ENCODE measurements at regions of chr3 and their contacts with region 1.

Region 1: GRCh38 chr3:149820180-149820579 is 7.2 kb downstream of the RNF13 start:
- H3K4me3 Mint-ChIP-seq: no peak overlapping the region
- H3K27ac Mint-ChIP-seq: no peak overlapping the region
- H3K4me1 Mint-ChIP-seq: peaks cover 40% of the 10 kb centered on the region
- H3K27me3 Mint-ChIP-seq: no peaks in the 10 kb centered on the region

Region 2: DNA sequence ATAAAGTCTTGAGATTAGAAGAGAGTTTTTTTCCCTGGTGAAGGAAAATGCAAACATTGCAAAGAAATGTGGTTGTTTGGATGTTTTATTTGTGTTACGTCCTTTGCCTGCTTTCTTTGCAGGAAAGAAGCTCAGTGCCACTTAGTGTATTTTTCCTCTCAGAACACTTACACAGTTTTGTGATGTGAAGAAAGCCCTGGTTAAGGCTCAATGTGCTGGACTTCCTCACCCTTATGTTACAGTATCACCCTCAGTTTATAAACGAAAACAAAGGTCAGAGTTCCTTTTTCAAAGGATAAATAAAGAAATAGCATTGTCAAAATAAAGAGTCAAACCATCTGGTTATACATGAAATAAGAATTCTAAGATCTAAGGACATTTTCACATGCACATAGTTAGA is 38.7 kb after region 1 on chr3:
- intact Hi-C with region 1: loop called (anchors 5 kb)
- H3K4me3 Mint-ChIP-seq: no peak overlapping the region
- H3K27ac Mint-ChIP-seq: no peak overlapping the region
- H3K4me1 Mint-ChIP-seq: peaks cover 5% of the 10 kb centered on the region
- H3K27me3 Mint-ChIP-seq: no peaks in the 10 kb centered on the region

Region 3: GRCh38 chr3:149879872-149880271 is 59.7 kb after region 1 on chr3:
- intact Hi-C with region 1: loop called (anchors 10 kb)
- H3K4me3 Mint-ChIP-seq: no peak overlapping the region
- H3K27ac Mint-ChIP-seq: no peak overlapping the region
- H3K4me1 Mint-ChIP-seq: peaks cover 28% of the 10 kb centered on the region
- H3K27me3 Mint-ChIP-seq: no peaks in the 10 kb centered on the region

Region 4: DNA sequence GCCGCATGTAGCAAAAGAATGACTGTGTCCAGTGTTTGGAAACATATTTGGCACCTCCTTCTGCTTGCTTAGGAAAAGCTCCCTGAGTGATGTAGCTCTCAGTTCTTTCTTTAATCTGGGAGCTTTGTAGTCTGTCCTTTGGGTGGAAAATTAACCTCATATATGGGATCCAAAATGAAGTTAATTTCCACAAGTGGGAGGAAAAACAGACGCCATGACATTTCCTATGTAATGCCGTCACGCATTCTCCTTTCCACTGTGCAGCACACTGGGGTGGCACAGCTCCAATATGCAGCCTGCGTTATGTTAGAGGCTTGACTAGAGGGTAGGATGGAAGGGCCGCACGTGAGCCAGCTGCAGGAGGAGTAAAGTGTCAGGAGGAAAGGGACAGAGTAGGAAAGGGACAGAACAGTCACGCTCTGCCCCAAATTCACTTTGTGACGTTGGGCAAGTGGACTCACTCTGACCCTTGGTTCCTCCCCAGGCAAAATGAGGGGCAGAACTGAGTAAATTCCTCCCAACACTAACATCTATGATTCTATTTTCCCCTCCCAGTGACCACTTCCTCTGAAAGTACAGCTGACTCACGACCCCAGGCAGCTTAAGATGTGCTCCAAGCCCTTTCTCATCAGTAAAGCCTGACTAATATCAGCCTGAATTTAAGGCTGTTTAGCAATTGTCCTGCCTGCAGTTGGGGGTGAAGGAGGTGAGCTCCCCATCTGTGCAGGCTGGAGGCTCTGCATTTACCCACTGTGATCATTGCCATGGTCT is 327.0 kb after region 1 on chr3:
- intact Hi-C with region 1: no loop called
- H3K4me3 Mint-ChIP-seq: no peak overlapping the region
- H3K27ac Mint-ChIP-seq: no peak overlapping the region
- H3K4me1 Mint-ChIP-seq: peaks cover 18% of the 10 kb centered on the region
- H3K27me3 Mint-ChIP-seq: no peaks in the 10 kb centered on the region

Region 5: DNA sequence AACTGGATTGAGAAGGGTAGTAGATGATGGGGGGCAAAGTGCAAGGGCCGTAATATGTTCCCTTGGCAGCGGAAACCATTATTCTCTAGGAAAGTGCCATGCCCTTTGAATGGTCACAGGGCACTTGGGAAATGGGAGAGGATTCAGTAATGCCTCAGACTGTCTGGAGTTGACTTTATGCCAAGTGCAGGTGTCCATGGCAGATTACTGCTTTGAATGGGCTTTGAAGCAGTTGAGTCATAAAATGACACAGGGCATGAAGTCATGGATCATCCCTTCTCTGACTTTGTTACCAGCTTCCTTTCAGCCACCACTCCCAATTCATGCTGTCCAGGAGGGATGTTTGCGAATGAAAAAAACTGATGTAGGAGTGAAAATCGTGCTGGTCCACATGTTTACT is 1933.7 kb after region 1 on chr3:
- intact Hi-C with region 1: no loop called
- H3K4me3 Mint-ChIP-seq: no peak overlapping the region
- H3K27ac Mint-ChIP-seq: no peak overlapping the region
- H3K4me1 Mint-ChIP-seq: peaks cover 8% of the 10 kb centered on the region
- H3K27me3 Mint-ChIP-seq: no peaks in the 10 kb centered on the region